ENCODE measurements at regions of chr17 and their contacts with region 1.

Region 1: DNA sequence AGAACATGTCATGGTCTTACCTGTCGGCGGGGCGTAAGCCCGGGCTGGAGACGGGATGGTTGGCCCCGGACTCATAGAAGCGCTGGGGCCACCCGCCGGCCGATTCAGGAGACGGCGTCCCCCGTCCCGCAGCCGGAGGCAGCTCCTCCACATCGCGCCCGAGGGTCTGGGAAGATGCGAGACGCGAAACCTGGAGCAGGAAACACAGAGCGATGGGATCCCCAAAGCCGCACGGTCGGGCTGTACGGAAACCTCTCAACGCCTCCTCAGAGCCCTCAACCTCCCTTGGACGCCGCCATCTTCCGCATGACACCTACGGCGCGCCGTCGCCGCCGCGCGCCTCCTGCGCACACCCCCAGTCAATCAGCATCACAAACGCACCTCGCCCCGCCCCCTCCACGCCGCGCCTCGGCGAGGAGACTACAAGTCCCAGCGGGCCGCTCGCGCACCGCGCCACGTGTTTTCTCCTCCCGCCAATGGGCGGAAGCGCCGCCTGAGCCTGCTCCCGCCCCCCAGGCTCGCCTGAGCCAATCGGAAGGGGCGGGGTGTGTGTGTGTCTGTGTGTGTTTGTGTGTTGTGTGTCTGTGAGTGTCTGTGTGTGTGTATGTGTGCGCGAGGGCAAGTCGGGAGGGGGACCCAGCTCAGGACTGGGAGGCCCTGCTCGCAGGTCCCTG is at the starts of genes ATPAF2 and GID4:
- DNase-seq: peak; percentile 99
- H3K4me3 ChIP-seq: peak within 1 kb of the TSS; percentile 94
- H3K27ac ChIP-seq: peak within 1 kb of the TSS; percentile 50
- H3K27me3 ChIP-seq: no peaks in the 10 kb centered on the region
- CTCF ChIP-seq: peak; percentile 33

Region 2: GRCh38 chr17:17823433-17824118 is 215.4 kb before region 1 on chr17:
- in situ Hi-C with region 1: no loop called
- DNase-seq: peak; percentile 46
- H3K4me3 ChIP-seq: peak overlapping the region; percentile 49
- H3K27ac ChIP-seq: peak overlapping the region; percentile 79
- H3K27me3 ChIP-seq: no peaks in the 10 kb centered on the region
- CTCF ChIP-seq: no peak

Region 3: DNA sequence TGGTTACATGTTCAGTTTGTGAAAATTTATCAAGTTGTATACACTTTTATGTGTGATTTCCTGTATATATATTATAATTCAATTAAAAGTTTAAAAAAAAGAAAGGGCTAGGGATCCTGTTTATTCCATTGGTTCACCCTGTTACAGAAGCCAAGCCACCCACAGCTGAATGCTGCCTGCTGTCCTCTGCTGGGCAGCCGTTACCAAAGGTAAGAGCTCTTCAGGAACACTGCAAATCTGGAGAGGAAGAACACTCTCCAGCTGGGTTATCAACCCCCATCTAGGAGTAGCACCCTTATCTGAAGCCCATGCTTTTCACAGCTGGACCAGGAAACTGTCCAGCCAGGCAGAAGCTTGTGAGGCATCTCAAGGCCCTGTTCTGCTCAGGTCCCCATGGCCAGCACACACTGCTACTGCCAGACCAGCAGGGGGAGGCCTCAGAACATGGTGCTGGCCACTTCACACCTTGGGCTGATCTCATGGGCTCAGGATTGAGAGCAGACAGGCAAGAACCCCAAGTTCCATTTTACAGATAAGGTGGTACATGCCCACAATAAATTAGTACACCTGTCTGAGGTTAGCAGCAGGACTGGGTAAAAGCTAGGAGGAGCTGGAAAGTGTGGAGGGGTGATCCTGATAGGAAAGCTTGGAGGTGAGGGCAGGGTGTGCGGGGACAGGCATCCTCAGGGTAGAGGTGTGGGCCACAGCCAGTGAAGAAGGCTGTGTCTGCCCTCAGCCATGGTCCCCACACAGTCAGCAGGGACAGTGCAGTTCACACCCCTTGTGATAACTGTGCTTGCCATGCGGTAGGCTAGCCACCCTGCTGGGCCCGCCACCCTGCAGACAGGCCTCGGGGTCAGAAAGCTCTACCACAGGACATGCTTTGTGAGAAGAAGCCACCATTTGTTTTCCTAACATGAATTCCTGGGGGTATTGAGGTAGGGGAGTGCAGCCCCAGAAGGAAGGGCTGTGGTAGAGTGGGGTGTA is 147.9 kb before region 1 on chr17:
- in situ Hi-C with region 1: loop called (anchors 10 kb)
- DNase-seq: peak; percentile 68
- H3K4me3 ChIP-seq: no peak overlapping the region
- H3K27ac ChIP-seq: no peak overlapping the region
- H3K27me3 ChIP-seq: no peaks in the 10 kb centered on the region
- CTCF ChIP-seq: peak; percentile 96

Measured in brain microvascular endothelial cell (primary cell).